Activated CD8-positive, alpha-beta memory T cell treated with anti-CD3 and anti-CD28 coated beads, Interleukin-2, amount 10 ng/mL, durations not matched to agents 7 days and 5 days (primary cell): ENCODE measurements at regions of chr14 and their contacts with region 1.

Region 1: DNA sequence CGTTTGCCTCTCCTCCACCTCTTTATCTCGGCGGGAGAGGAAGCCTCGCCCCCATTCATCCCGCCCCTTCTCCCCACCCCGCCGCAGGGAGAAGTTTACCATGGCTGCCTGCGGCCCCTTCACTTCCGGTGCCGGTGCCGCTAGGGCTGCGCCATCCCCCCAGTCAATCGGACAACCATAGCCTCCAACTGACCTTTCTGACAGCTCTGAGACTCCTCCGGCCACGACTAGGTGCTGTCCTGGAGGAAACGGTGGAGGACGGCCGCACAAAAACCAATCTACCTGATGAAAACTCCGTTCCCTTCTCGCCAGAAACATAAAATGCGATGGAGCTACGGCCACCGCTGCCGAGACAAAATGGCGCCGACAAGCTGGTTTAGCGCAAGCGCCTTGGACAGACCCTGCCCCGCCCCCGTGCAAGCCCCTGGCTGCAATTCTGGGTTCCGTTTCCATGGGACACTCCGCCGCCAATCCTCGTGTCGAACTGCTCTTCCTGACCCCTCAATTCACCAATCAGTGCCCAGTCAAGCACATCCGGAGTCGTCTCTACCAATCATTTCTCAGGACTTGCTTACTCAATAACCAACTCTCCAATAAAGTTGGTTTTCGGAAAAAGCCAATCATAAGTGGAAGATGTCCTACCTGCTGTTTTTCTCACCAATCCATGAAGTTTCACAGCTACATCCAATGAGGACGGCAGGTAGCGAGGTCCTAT is 436 bp upstream of the ARID4A start:
- DNase-seq: peak; percentile 99
- ATAC-seq: peak; percentile 88
- H3K4me3 Mint-ChIP-seq: no peak overlapping the region
- H3K27ac Mint-ChIP-seq: no peak overlapping the region
- H3K4me1 Mint-ChIP-seq: peaks cover 43% of the 10 kb centered on the region
- H3K27me3 Mint-ChIP-seq: no peaks in the 10 kb centered on the region

Region 2: GRCh38 chr14:58427281-58428117 is 129.6 kb after region 1 on chr14 and contains the starts of genes KIAA0586 and TIMM9:
- CTCF ChIA-PET with region 1: interaction called, 11 read pairs
- DNase-seq: peak; percentile 98
- ATAC-seq: peak; percentile 91
- H3K4me3 Mint-ChIP-seq: peak within 1 kb of the TSS; percentile 78
- H3K27ac Mint-ChIP-seq: peak within 1 kb of the TSS; percentile 91
- H3K4me1 Mint-ChIP-seq: peaks cover 44% of the 10 kb centered on the region
- H3K27me3 Mint-ChIP-seq: peaks cover 3% of the 10 kb centered on the region
- total RNA-seq, gene KIAA0586: 24.1 to 27.7 TPM
- total RNA-seq, gene TIMM9: 29.4 to 44.3 TPM